CD4-positive, alpha-beta memory T cell (primary cell): ENCODE measurements at regions of chr9 and their contacts with region 1.

Region 1: GRCh38 chr9:137000177-137000883 is 4.0 kb upstream of the CLIC3 start:
- DNase-seq: peak in 4 of 5 donors; percentile 40 to 53 (median 44)
- H3K4me3 ChIP-seq: no peak overlapping the region
- H3K4me3 Mint-ChIP-seq: peak overlapping the region in 7 of 8 donors; percentile 26 to 81 (median 60)
- H3K27ac ChIP-seq: no peak overlapping the region
- H3K27ac Mint-ChIP-seq: peak overlapping the region; percentile 65 to 92 (median 86)
- H3K4me1 ChIP-seq: peaks cover 45% of the 10 kb centered on the region
- H3K4me1 Mint-ChIP-seq: peaks cover 13 to 50% (median 25%) of the 10 kb centered on the region in 4 donors
- H3K27me3 ChIP-seq: no peaks in the 10 kb centered on the region
- H3K27me3 Mint-ChIP-seq: no peaks in the 10 kb centered on the region

Region 2: GRCh38 chr9:136960212-136960937 is 40.0 kb before region 1 on chr9:
- CTCF ChIA-PET with region 1: no interaction called
- POLR2A ChIA-PET with region 1: interaction called, 19 read pairs
- intact Hi-C with region 1: no loop called
- DNase-seq: peak in 4 of 5 donors; percentile 36 to 45 (median 41)
- H3K4me3 ChIP-seq: no peak overlapping the region
- H3K4me3 Mint-ChIP-seq: peak overlapping the region; percentile 56 to 81 (median 78)
- H3K27ac ChIP-seq: peak overlapping the region; percentile 24
- H3K27ac Mint-ChIP-seq: peak overlapping the region; percentile 13 to 96 (median 94)
- H3K4me1 ChIP-seq: peaks cover 63% of the 10 kb centered on the region
- H3K4me1 Mint-ChIP-seq: peaks cover 19 to 61% (median 25%) of the 10 kb centered on the region in 4 donors
- H3K27me3 ChIP-seq: no peaks in the 10 kb centered on the region
- H3K27me3 Mint-ChIP-seq: no peaks in the 10 kb centered on the region

Region 3: GRCh38 chr9:137011156-137011555 is 10.8 kb after region 1 on chr9:
- CTCF ChIA-PET with region 1: no interaction called
- POLR2A ChIA-PET with region 1: no interaction called
- intact Hi-C with region 1: no loop called
- DNase-seq: no peak
- H3K4me3 ChIP-seq: no peak overlapping the region
- H3K4me3 Mint-ChIP-seq: no peak overlapping the region
- H3K27ac ChIP-seq: no peak overlapping the region
- H3K27ac Mint-ChIP-seq: no peak overlapping the region
- H3K4me1 ChIP-seq: no peaks in the 10 kb centered on the region
- H3K4me1 Mint-ChIP-seq: no peaks in the 10 kb centered on the region
- H3K27me3 ChIP-seq: no peaks in the 10 kb centered on the region
- H3K27me3 Mint-ChIP-seq: no peaks in the 10 kb centered on the region

Region 4: GRCh38 chr9:137339045-137339907 is 338.9 kb after region 1 on chr9:
- CTCF ChIA-PET with region 1: no interaction called
- POLR2A ChIA-PET with region 1: no interaction called
- intact Hi-C with region 1: no loop called
- DNase-seq: no peak
- H3K4me3 ChIP-seq: no peak overlapping the region
- H3K4me3 Mint-ChIP-seq: no peak overlapping the region
- H3K27ac ChIP-seq: no peak overlapping the region
- H3K27ac Mint-ChIP-seq: no peak overlapping the region
- H3K4me1 ChIP-seq: no peaks in the 10 kb centered on the region
- H3K4me1 Mint-ChIP-seq: no peaks in the 10 kb centered on the region
- H3K27me3 ChIP-seq: no peaks in the 10 kb centered on the region
- H3K27me3 Mint-ChIP-seq: no peaks in the 10 kb centered on the region